Dorsolateral prefrontal cortex (tissue), 120 donors: ENCODE measurements at regions of chr16 and their contacts with region 1.

Region 1: DNA sequence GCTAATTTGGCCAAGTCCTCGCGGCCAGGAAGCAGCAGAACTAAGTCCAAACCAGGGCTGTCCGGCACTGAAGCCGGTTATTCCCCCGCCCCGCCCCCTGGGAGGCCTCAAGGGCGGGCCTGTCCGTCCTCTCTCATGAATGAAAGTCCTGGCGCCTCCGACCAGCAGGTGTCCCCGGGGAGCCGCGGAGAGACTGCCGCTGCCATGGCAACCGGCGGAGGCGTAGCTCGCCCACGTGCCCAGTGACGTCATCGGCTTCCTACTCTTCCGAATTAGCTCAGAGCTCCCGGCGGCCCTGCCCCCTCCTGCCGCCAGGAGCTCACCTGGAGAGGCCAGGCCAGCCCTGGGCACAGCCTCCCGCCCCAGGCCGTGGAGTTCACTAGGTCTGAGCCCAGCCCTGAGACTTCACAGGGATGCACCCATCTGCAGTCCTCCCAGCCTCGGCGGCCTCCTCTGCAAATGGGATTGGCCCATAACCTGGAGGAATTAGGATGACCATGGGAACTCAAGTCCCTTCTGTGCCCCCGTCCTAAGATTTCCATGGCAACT is 1.3 kb downstream of the SPATA2L start:
- DNase-seq: peak; percentile 99 to 100 (median 100)
- H3K4me3 ChIP-seq: peak overlapping the region; percentile 53 to 82 (median 73)
- H3K27ac ChIP-seq: peak overlapping the region in 57 of 59 donors; percentile 2 to 93 (median 80)
- H3K27me3 ChIP-seq: no peaks in the 10 kb centered on the region
- CTCF ChIP-seq: peak; percentile 64 to 96 (median 86)

Region 2: GRCh38 chr16:88170528-88170991 is 1529.6 kb before region 1 on chr16:
- intact Hi-C with region 1: no loop called
- DNase-seq: peak in 1 of 10 donors; percentile 8
- H3K4me3 ChIP-seq: no peak overlapping the region
- H3K27ac ChIP-seq: no peak overlapping the region
- H3K27me3 ChIP-seq: peaks cover 0 to 9% (median 0%) of the 10 kb centered on the region in 45 donors
- CTCF ChIP-seq: no peak

Region 3: DNA sequence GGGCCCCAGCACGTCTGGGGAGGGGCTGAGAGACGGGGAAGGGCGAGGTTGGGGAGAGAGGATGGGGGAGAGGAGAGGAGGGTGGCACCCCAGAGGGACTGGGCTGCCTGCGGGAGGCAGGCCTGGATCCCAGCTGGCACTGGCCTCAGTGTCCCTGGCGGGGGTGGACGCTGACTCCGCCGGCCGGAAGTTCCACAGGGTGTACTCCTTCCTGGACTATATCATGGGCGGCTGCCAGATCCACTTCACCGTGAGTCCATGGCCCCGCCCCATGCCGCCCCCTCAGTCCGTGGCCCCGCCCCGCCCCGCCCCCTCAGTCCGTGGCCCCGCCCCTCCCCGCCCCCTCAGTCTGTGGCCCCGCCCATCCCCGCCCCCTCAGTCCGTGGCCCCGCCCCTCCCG is 113.3 kb before region 1 on chr16:
- intact Hi-C with region 1: no loop called
- DNase-seq: no peak
- H3K4me3 ChIP-seq: no peak overlapping the region
- H3K27ac ChIP-seq: no peak overlapping the region
- H3K27me3 ChIP-seq: no peaks in the 10 kb centered on the region
- CTCF ChIP-seq: no peak

Region 4: DNA sequence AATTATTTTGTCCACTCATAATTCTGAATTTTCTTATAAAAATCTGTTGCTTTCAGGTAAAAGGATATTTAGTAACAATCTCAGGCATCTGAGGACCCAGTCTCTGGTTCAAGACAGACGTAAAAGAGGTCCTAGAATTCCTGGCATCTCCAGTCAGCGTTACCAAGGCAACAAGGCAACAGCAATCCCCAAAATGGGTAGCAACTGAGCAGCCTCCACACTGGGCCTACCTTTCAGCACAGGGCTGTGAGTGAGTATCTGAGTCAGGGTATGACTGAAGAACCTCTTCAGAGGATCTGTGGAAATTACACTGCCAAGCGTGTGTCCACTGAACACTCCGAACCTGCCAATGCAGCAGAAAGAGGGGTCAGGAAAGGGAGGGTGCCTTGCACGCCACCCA is 95.5 kb after region 1 on chr16:
- intact Hi-C with region 1: loop called in 1 of 2 experiments (anchors 2 kb)
- DNase-seq: peak in 5 of 10 donors; percentile 19 to 63 (median 45)
- H3K4me3 ChIP-seq: no peak overlapping the region
- H3K27ac ChIP-seq: peak overlapping the region in 3 of 59 donors; percentile 27 to 60 (median 46)
- H3K27me3 ChIP-seq: no peaks in the 10 kb centered on the region
- CTCF ChIP-seq: no peak

Region 5: GRCh38 chr16:89860747-89861304 is 160.7 kb after region 1 on chr16:
- intact Hi-C with region 1: loop called (anchors 2 to 5 kb)
- DNase-seq: peak in 7 of 10 donors; percentile 35 to 78 (median 53)
- H3K4me3 ChIP-seq: no peak overlapping the region
- H3K27ac ChIP-seq: no peak overlapping the region
- H3K27me3 ChIP-seq: no peaks in the 10 kb centered on the region
- CTCF ChIP-seq: peak; percentile 55 to 91 (median 84)

Region 6: DNA sequence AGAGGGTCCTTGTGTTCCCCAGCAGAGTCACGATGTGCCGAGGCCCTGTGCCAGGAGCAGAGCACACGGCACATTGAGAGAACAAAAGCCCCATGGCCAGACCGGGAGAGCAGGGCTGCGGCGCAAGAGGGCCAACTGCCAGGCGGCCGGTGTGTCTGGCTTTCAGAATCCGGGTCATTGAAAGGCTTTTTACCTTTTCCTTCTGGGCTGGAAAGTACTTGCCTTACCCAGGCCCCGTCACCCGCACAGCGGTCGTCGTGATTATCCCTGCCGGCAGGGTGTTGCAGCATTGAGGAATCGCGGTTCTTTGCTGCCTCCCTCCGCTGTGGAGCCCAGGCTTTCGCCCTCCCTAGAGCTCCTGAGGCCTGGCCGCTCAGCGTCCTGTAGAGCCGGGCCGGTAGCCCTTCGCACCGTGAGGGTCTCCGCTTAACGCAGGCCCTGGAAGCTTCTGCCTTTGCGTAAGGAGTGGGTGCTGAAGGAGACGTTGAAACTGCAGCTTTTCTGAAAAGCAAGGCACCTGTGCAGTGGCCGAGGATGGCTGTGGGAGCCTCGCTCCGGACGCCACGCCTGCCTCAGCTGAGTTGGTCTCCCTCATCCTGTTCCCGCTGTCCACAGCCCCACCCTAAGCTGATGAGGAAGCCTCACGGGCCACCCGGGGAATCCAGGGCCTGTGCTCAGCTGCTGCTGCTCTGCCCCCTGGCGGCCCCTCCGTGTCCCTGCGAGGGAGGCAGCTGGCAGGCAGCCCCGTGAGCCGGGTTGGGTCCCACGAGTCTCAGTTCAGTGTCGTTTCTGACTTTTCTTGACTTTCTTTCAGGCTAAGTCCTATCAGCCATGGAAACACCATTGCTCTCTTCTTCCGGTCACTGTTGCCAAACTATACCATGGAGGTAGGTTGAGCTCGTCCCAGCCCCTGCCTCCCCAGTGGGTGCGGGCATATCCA is 209.9 kb after region 1 on chr16:
- intact Hi-C with region 1: loop called in 1 of 2 experiments (anchors 5 kb)
- DNase-seq: peak; percentile 81 to 90 (median 84)
- H3K4me3 ChIP-seq: peak overlapping the region in 24 of 59 donors; percentile 7 to 47 (median 24)
- H3K27ac ChIP-seq: peak overlapping the region in 58 of 59 donors; percentile 33 to 88 (median 81)
- H3K27me3 ChIP-seq: no peaks in the 10 kb centered on the region
- CTCF ChIP-seq: peak; percentile 73 to 96 (median 90)